ENCODE measurements at regions of chr4 and their contacts with region 1.

Region 1: GRCh38 chr4:114250439-114250891 is 271.0 kb upstream of the ARSJ start:
- DNase-seq: no peak
- H3K4me3 Mint-ChIP-seq: no peak overlapping the region
- H3K27ac Mint-ChIP-seq: no peak overlapping the region
- H3K4me1 Mint-ChIP-seq: no peaks in the 10 kb centered on the region
- H3K27me3 Mint-ChIP-seq: peaks cover 3% of the 10 kb centered on the region

Region 2: GRCh38 chr4:114263233-114263632 is 12.8 kb after region 1 on chr4:
- intact Hi-C with region 1: loop called (anchors 1 kb)
- DNase-seq: no peak
- H3K4me3 Mint-ChIP-seq: no peak overlapping the region
- H3K27ac Mint-ChIP-seq: no peak overlapping the region
- H3K4me1 Mint-ChIP-seq: no peaks in the 10 kb centered on the region
- H3K27me3 Mint-ChIP-seq: no peaks in the 10 kb centered on the region